Activated naive CD4-positive, alpha-beta T cell treated with anti-CD3 and anti-CD28 coated beads, Interleukin-2, amount 10 ng/mL, durations not matched to agents 7 days and 5 days (primary cell): ENCODE measurements at regions of chr6 and their contacts with region 1.

Region 1: GRCh38 chr6:148758492-148758891 is 11.7 kb downstream of the UST start:
- DNase-seq: peak; percentile 38
- H3K4me3 Mint-ChIP-seq: no peak overlapping the region
- H3K27ac Mint-ChIP-seq: no peak overlapping the region
- H3K4me1 Mint-ChIP-seq: peaks cover 39% of the 10 kb centered on the region
- H3K27me3 Mint-ChIP-seq: peaks cover 44% of the 10 kb centered on the region

Region 2: DNA sequence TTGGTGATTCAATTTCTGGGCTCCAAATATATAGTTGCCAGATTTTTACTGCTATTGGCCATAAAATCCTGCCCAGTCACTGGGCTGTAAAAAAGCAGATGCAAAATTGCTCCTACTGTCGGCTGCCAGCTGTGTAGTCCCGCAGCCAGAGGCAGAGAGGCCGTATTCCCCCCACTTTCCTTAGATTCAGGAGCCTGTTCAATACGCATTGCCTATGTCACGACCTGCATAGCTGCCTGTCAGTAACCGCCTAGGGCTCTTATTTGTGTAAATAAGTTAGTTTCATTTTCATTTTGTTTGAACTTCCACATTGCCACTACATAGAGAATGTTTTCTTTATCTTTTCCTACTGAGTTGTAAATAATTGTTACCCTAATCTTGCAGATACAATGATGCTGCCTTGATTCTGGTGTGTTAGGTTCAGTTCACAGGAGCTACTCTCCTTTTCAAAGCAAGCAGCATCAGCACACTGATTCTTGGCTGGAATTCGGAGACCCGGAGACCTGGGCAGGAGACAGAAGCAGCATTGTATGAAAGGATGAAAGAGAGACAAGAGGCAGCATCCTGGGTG is 57.7 kb before region 1 on chr6:
- CTCF ChIA-PET with region 1: no interaction called
- DNase-seq: peak; percentile 39
- H3K4me3 Mint-ChIP-seq: peak overlapping the region; percentile 65
- H3K27ac Mint-ChIP-seq: peak overlapping the region; percentile 65
- H3K4me1 Mint-ChIP-seq: peaks cover 8% of the 10 kb centered on the region
- H3K27me3 Mint-ChIP-seq: peaks cover 7% of the 10 kb centered on the region

Region 3: GRCh38 chr6:148736774-148737412 is 21.6 kb before region 1 on chr6:
- CTCF ChIA-PET with region 1: no interaction called
- DNase-seq: peak; percentile 25
- H3K4me3 Mint-ChIP-seq: no peak overlapping the region
- H3K27ac Mint-ChIP-seq: no peak overlapping the region
- H3K4me1 Mint-ChIP-seq: no peaks in the 10 kb centered on the region
- H3K27me3 Mint-ChIP-seq: peaks cover 11% of the 10 kb centered on the region

Region 4: DNA sequence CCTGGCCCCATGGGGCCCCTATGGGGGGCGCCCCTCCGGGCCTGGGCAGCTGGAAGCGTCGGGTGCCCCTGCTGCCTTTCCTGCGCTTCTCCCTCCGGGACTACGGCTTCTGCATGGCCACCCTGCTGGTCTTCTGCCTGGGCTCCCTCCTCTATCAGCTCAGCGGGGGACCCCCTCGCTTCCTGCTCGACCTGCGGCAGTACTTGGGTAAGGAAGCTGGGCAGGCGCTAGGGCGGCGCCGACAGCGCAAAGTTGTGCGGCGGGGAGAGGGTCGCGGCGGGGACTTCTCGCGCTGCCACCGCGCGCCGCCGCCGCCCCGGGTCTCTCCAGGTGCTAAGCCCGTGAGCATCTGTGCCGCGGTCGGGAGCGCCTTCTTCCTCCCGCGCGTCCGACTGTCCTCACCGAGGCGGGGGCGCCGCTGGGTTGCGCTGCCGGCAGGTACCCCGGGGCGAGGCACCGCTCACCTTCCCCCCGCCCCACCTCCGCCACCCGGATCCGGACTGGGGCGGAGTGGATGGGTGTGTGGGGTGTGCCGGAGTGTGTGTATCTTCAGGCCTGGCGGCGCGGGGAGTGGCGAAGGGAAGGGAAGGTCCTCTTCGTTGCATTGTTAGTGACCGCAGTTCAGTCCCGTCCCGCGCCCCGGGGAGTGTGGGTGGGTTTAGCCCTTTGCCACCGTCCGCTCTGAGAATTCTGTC is 10.9 kb before region 1 on chr6:
- CTCF ChIA-PET with region 1: interaction called, 11 read pairs
- DNase-seq: peak; percentile 55
- H3K4me3 Mint-ChIP-seq: peak overlapping the region; percentile 59
- H3K27ac Mint-ChIP-seq: no peak overlapping the region
- H3K4me1 Mint-ChIP-seq: peaks cover 23% of the 10 kb centered on the region
- H3K27me3 Mint-ChIP-seq: peaks cover 82% of the 10 kb centered on the region

Region 5: DNA sequence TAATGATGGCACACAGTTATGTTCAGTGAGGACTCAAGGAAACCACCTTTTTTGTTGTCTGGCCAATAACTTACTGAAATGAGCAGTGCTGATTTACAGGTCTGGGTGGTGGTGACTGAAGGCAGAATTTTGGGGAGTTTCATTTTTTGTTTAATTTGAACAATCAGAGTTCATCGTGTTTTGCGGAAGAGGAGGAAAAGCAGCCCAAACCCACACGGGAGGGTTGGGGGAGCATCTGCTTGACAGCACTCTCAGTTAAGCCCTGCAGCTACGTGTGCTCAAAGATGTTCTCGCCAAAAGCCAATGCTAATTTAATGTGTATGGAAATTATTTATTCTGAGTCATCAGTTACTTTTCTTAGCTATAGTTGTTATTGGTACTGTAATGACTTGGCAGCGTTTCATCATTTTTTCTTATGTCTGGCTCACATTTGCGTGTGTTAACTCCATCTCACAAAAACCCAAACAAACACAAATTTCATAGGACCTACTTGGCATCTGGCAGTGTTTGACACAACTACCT is 77.5 kb after region 1 on chr6:
- CTCF ChIA-PET with region 1: no interaction called
- DNase-seq: no peak
- H3K4me3 Mint-ChIP-seq: no peak overlapping the region
- H3K27ac Mint-ChIP-seq: no peak overlapping the region
- H3K4me1 Mint-ChIP-seq: peaks cover 3% of the 10 kb centered on the region
- H3K27me3 Mint-ChIP-seq: peaks cover 17% of the 10 kb centered on the region